ENCODE measurements at regions of chr6 and their contacts with region 1.

Region 1: GRCh38 chr6:121305957-121306607 is 28.2 kb downstream of the TBC1D32 start:
- DNase-seq: no peak
- ATAC-seq: peak; percentile 58
- H3K4me3 Mint-ChIP-seq: no peak overlapping the region
- H3K27ac Mint-ChIP-seq: no peak overlapping the region
- H3K4me1 Mint-ChIP-seq: peaks cover 4% of the 10 kb centered on the region
- H3K27me3 Mint-ChIP-seq: no peaks in the 10 kb centered on the region
- CTCF ChIP-seq: peak; percentile 69

Region 2: DNA sequence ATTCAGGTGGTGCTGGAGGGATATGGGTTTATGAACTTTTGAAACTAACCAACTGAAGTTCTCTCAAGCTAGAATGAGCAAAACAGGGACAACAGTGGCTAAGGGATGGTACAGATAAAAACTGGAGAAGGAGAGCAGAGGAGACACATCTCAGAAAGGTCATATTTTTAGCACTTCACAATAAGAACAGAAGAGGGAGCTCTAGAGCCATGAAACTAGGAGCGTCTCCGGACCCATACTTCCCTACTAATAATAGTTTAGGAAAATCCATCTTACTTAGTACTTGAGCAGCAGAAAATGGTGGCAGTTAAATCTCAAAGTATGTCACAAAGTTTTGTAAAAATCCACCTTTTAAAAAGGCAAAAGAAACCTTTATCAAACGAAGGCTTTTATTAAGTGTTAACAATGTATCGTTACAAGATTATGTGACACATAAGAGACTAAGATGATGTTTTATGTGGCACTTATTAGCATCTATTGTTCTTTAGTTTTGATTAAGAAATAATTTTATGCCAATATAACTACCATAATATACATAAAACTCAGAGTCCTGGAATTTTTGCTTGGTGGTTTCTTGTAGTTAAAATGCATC is 250.4 kb before region 1 on chr6:
- CTCF ChIA-PET with region 1: interaction called, 23 read pairs
- POLR2A ChIA-PET with region 1: no interaction called
- intact Hi-C with region 1: loop called (anchors 1 kb)
- DNase-seq: no peak
- ATAC-seq: peak; percentile 56
- H3K4me3 Mint-ChIP-seq: no peak overlapping the region
- H3K27ac Mint-ChIP-seq: no peak overlapping the region
- H3K4me1 Mint-ChIP-seq: no peaks in the 10 kb centered on the region
- H3K27me3 Mint-ChIP-seq: no peaks in the 10 kb centered on the region
- CTCF ChIP-seq: peak; percentile 90

Region 3: GRCh38 chr6:121222656-121223055 is 83.4 kb before region 1 on chr6:
- CTCF ChIA-PET with region 1: no interaction called
- POLR2A ChIA-PET with region 1: no interaction called
- intact Hi-C with region 1: no loop called
- DNase-seq: no peak
- ATAC-seq: no peak
- H3K4me3 Mint-ChIP-seq: no peak overlapping the region
- H3K27ac Mint-ChIP-seq: no peak overlapping the region
- H3K4me1 Mint-ChIP-seq: no peaks in the 10 kb centered on the region
- H3K27me3 Mint-ChIP-seq: no peaks in the 10 kb centered on the region
- CTCF ChIP-seq: no peak

Region 4: DNA sequence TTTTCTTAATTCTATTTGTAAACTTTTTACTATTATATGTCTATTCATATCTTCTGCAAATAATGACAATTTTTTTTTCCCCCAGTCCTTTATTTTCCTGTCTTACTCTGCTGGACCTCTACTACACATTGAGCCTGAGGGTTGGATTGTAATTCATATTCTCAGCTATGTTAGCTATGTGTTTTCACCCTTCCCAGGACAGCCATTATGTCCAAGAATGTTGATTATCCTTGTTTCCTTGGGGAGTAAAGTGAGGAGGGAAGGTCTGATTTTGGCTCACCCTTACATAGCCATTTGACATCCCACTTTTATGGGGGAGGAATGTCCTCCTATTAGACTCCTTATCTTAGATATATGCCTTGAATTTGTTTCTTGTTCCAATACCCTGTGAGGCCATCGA is 45.8 kb after region 1 on chr6:
- CTCF ChIA-PET with region 1: no interaction called
- POLR2A ChIA-PET with region 1: no interaction called
- intact Hi-C with region 1: no loop called
- DNase-seq: no peak
- ATAC-seq: no peak
- H3K4me3 Mint-ChIP-seq: no peak overlapping the region
- H3K27ac Mint-ChIP-seq: no peak overlapping the region
- H3K4me1 Mint-ChIP-seq: no peaks in the 10 kb centered on the region
- H3K27me3 Mint-ChIP-seq: peaks cover 23% of the 10 kb centered on the region
- CTCF ChIP-seq: no peak